ENCODE measurements at regions of chr3 and their contacts with region 1.

Region 1: DNA sequence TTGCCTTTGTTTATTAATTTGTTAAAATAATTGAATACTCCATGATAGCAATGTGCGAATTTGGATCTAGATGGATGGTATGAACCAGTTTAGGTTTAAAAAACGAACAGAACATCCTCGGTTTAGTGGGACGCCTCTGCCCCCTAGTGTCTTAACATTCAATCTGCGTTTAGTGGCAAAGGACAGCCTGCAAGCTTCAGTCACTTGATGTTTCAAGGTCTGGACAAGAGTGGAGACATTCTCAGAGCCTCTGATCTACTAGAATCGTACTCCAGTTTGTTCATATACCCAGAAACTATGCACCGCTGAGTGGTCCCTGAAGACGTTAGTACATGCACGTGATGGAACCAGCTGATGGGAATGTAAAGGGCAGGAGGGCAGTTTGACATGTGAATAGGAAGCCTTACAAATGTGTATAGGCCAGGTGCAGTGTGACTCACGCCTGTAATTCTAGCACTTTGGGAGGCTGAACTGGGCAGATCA is 17.8 kb upstream of the ATP13A4 start:
- DNase-seq: peak; percentile 66 to 75
- H3K4me3 ChIP-seq: no peak overlapping the region
- H3K27ac ChIP-seq: no peak overlapping the region
- H3K4me1 ChIP-seq: no peaks in the 10 kb centered on the region
- H3K27me3 ChIP-seq: no peaks in the 10 kb centered on the region
- CTCF ChIP-seq: peak; percentile 51 to 90 (median 78)
- POLR2A ChIP-seq: no peak

Region 2: GRCh38 chr3:193190146-193190786 is 382.2 kb before region 1 on chr3:
- intact Hi-C with region 1: loop called (anchors 10 kb)
- DNase-seq: peak; percentile 30 to 33
- H3K4me3 ChIP-seq: no peak overlapping the region
- H3K27ac ChIP-seq: no peak overlapping the region
- H3K4me1 ChIP-seq: no peaks in the 10 kb centered on the region
- H3K27me3 ChIP-seq: no peaks in the 10 kb centered on the region
- CTCF ChIP-seq: peak in 5 of 6 experiments; percentile 13 to 56 (median 47)
- POLR2A ChIP-seq: no peak

Region 3: GRCh38 chr3:193400304-193400703 is 172.2 kb before region 1 on chr3:
- intact Hi-C with region 1: no loop called
- DNase-seq: peak; percentile 92 to 94
- H3K4me3 ChIP-seq: no peak overlapping the region
- H3K27ac ChIP-seq: peak overlapping the region; percentile 72 to 85 (median 76)
- H3K4me1 ChIP-seq: peaks cover 43 to 59% of the 10 kb centered on the region in 2 donors
- H3K27me3 ChIP-seq: no peaks in the 10 kb centered on the region
- CTCF ChIP-seq: no peak
- POLR2A ChIP-seq: no peak

Region 4: DNA sequence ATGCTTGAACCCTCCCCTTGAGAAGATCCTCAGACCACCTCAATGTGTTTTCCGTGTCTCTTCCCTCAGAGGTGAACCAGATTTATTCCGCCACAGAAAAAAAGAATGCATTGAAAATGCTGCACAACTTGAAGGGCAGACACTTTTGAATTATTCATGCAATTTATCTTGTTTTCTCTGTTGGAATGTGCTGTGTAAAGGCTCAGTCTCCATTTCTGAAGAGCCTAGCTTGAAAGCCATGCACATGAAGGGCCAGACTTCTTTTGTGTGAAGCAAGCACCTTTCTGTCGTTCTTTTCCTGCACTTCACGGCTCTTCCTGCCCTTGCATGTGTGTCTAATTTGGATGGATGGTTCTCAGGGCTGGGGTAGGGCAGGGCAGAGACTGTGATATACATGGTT is 114.9 kb before region 1 on chr3:
- intact Hi-C with region 1: loop called (anchors 5 kb)
- DNase-seq: no peak
- H3K4me3 ChIP-seq: no peak overlapping the region
- H3K27ac ChIP-seq: no peak overlapping the region
- H3K4me1 ChIP-seq: peaks cover 0 to 5% of the 10 kb centered on the region in 2 donors
- H3K27me3 ChIP-seq: no peaks in the 10 kb centered on the region
- CTCF ChIP-seq: no peak
- POLR2A ChIP-seq: no peak

Region 5: DNA sequence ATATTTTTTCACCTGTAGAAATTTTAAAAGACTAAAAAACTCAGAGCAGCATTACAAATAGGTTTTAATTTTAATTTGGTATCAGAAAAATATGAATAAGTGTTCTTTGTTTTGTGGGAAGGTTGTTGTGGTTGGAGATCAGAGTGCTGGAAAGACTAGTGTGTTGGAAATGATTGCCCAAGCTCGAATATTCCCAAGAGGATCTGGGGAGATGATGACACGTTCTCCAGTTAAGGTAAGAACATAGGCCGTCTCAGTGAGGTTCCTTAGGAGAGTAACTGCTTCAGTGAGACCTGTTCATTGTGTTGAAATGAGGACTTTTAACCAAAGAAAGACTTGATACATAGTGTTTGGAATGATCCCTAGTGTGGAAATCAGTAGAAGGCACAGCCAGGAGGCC is 65.4 kb after region 1 on chr3:
- intact Hi-C with region 1: no loop called
- DNase-seq: no peak
- H3K4me3 ChIP-seq: no peak overlapping the region
- H3K27ac ChIP-seq: no peak overlapping the region
- H3K4me1 ChIP-seq: no peaks in the 10 kb centered on the region
- H3K27me3 ChIP-seq: no peaks in the 10 kb centered on the region
- CTCF ChIP-seq: no peak
- POLR2A ChIP-seq: no peak